Activated B cell treated with CpG ODN at 0.5 μM for 24 hours (primary cell): ENCODE measurements at regions of chr3 and their contacts with region 1.

Region 1: GRCh38 chr3:49802719-49803464 is at the start of gene INKA1:
- DNase-seq: peak; percentile 82
- ATAC-seq: peak; percentile 68
- H3K4me3 Mint-ChIP-seq: peak within 1 kb of the TSS; percentile 92
- H3K27ac Mint-ChIP-seq: peak within 1 kb of the TSS; percentile 92
- H3K4me1 Mint-ChIP-seq: peaks cover 48% of the 10 kb centered on the region
- H3K27me3 Mint-ChIP-seq: no peaks in the 10 kb centered on the region
- CTCF ChIP-seq: peak; percentile 45
- total RNA-seq, gene INKA1: 9.4 and 10.0 TPM in 2 replicates

Region 2: DNA sequence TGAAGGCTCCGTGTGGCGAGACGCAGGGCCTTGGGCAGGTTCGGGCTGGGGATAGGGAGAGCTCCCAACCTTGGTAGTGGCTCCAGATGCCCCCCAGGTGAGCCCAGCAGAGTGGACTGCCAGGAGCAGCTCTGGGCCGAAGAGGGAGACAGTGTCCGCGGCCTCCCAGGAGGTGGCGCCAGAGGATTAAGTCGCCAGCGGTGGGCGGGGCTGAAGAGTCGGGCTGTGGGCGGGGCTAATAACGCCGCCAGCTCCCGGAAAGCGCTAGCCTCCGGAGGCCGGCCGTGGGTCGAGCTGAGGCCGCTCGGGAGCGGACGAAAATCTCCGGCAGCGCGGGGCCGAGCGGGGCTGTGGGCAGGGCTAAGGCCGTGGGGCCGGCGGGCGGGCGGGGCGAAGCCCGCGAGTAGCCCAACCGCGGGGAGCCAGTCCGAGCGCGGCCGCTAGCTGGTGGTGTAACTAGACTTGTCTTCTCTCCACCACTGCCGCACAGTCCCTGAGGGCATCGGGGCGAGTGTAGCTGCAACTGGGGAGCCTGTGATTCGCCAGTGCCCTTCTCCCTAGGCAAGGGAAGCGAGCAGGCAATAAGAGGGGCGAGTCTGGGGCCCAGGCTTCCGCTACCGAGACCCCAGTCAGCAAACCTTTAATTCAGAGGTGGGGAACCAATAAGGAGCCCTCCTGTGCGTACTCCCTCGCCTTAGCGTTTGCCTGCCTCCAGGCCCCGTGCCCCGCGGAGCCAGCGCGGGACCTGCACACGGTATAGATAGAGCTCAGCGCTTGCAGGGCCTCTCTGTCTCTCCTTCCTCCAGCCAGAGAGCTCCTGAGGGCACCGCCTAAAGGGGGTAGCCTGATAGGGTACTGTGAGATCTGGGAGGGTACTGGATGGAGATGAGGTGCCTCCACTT is 263.0 kb before region 1 on chr3:
- CTCF ChIA-PET with region 1: interaction called, 8 read pairs
- POLR2A ChIA-PET with region 1: no interaction called
- intact Hi-C with region 1: loop called (anchors 1 kb)
- DNase-seq: peak; percentile 93
- ATAC-seq: peak; percentile 92
- H3K4me3 Mint-ChIP-seq: peak overlapping the region; percentile 79
- H3K27ac Mint-ChIP-seq: peak overlapping the region; percentile 46
- H3K4me1 Mint-ChIP-seq: peaks cover 9% of the 10 kb centered on the region
- H3K27me3 Mint-ChIP-seq: peaks cover 11% of the 10 kb centered on the region
- CTCF ChIP-seq: no peak

Region 3: GRCh38 chr3:49786241-49786958 is 16.5 kb before region 1 on chr3 and contains the start of gene IP6K1:
- CTCF ChIA-PET with region 1: no interaction called
- POLR2A ChIA-PET with region 1: interaction called, 19 read pairs
- intact Hi-C with region 1: loop called (anchors 1 kb)
- DNase-seq: peak; percentile 97
- ATAC-seq: peak; percentile 99
- H3K4me3 Mint-ChIP-seq: peak within 1 kb of the TSS; percentile 91
- H3K27ac Mint-ChIP-seq: peak within 1 kb of the TSS; percentile 93
- H3K4me1 Mint-ChIP-seq: peaks cover 32% of the 10 kb centered on the region
- H3K27me3 Mint-ChIP-seq: no peaks in the 10 kb centered on the region
- CTCF ChIP-seq: no peak
- total RNA-seq, gene IP6K1: 44.3 and 47.6 TPM in 2 replicates

Region 4: DNA sequence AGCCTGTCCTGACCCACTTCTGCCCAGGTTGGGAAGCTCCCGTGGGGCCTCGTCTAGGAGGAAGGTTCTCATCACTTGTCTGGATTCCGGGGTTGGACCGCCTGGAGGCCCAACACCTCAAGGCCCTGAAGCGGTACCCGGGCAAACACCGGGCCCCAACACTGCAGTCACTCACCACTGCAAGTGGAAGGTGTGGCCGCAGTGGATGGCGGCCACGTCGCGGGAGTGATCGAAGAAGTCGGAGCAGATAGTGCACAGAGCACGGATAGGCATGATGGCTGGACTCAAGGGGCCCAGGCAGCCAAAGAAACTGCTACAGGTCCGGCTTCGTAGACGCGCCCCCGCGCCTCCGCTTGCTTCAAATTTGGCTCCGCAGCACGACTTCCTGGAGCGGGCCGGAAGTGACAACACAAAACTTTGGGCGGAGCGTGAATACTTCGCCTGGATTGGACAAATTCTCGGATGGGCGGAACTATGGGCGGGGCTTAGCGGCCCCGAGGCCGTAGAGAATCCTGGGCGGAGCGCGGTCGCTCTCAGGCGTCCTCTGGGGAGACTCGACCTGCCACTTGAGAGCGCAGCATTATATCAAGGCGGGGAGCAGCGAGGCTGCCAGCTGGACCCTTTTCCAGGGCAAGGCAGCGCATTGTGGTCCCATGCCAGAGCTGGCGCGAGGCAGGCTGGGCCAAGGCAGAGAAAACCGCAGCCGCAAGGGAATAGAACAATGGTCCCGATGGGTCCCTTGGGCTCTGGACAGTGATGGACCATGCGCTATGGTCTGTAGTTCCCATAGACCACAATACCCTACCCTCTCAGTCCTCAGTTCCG is 53.5 kb after region 1 on chr3 and contains the start of gene TRAIP:
- CTCF ChIA-PET with region 1: no interaction called
- POLR2A ChIA-PET with region 1: interaction called, 3 read pairs
- intact Hi-C with region 1: loop called (anchors 1 kb)
- DNase-seq: peak; percentile 94
- ATAC-seq: peak; percentile 100
- H3K4me3 Mint-ChIP-seq: peak within 1 kb of the TSS; percentile 86
- H3K27ac Mint-ChIP-seq: peak within 1 kb of the TSS; percentile 80
- H3K4me1 Mint-ChIP-seq: peaks cover 15% of the 10 kb centered on the region
- H3K27me3 Mint-ChIP-seq: peaks cover 3% of the 10 kb centered on the region
- CTCF ChIP-seq: no peak
- total RNA-seq, gene TRAIP: 6.4 TPM in 2 replicates

Region 5: DNA sequence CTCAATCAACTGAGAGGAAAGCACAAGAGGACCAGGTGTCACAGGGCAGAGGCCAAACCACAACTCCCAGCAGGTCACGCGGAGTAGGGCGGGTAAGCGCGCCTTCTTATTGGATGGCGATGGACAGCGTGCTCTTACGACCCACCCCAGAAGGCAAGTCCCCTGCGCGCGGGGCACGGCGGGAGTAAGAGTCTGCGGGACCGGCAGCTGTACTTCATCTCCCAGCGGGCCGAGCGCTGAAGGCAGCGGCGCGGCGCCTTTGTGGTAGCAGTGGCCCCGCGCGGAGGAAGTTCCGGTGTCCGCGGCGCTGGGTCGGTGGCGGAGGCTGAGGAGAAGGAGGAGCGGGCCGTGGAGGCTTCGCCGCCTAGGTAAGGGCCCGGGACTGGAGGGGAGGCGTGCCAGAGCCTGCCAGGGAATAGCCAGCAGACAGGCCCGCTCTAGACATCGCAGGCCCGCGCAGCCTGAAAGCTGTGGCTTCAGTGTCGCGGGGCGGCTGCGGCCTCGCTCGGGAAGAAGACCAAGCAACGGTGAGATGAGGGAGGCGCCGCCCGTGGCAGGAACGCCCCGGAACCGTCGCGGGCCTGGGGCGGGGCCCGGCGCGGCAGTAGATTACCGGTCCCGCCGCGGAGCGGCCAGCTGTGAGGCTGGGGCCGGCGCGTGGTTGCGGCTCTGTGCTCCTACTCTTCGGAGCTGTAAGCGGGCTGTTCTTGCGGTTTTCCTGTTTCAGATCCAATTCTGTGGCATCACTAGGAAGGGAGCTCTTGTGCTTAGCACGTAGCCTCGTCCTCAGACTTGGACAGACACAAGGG is 137.2 kb after region 1 on chr3 and contains the start of gene RBM6:
- CTCF ChIA-PET with region 1: no interaction called
- POLR2A ChIA-PET with region 1: interaction called, 11 read pairs
- intact Hi-C with region 1: no loop called
- DNase-seq: peak; percentile 89
- ATAC-seq: peak; percentile 93
- H3K4me3 Mint-ChIP-seq: peak within 1 kb of the TSS; percentile 98
- H3K27ac Mint-ChIP-seq: peak within 1 kb of the TSS; percentile 97
- H3K4me1 Mint-ChIP-seq: peaks cover 43% of the 10 kb centered on the region
- H3K27me3 Mint-ChIP-seq: no peaks in the 10 kb centered on the region
- CTCF ChIP-seq: no peak
- total RNA-seq, gene RBM6: 160 and 172 TPM in 2 replicates

Region 6: DNA sequence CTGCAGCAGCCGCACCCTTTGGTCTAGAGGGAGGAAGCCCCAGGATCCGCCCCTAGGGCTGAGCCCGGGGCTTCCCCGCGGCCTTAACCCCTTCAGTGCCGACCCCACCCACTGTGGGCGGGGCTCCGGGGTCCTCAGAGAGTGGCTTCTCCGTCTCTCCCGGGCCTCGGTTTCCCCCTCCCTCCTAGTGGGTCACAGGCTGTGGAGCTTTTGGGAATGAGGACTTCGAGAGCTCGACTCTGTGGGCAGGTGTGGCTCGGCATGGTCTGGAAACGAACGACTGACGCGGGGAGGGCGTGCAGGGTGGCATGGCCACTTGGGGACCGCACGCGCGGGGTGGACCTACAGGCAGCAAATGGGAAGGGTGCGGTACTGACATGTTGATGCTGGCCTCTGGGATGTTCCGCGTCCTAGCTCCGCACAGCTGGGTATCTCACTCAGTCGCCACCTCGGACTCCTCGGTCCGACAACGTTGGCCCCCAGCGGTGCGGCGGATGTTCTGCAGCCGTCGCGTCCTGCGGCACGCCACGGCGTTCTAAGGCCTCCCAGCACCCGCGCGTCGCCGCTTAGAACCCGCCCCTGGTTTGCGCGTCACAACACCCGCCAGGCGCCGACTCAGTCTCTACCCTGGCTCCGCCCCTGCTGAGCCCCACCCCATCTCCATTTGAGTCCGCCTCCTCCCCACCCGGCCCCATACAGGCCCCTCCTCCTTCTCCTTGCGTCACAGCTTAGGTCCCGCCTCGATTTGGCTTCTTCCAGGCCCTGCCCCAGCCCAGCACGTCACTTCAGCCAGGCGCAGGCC is 496.1 kb after region 1 on chr3 and contains the starts of genes HYAL3 and NAA80:
- CTCF ChIA-PET with region 1: no interaction called
- POLR2A ChIA-PET with region 1: no interaction called
- intact Hi-C with region 1: loop called (anchors 10 kb)
- DNase-seq: peak; percentile 98
- ATAC-seq: peak; percentile 89
- H3K4me3 Mint-ChIP-seq: peak within 1 kb of the TSS; percentile 98
- H3K27ac Mint-ChIP-seq: peak within 1 kb of the TSS; percentile 98
- H3K4me1 Mint-ChIP-seq: peaks cover 30% of the 10 kb centered on the region
- H3K27me3 Mint-ChIP-seq: no peaks in the 10 kb centered on the region
- CTCF ChIP-seq: no peak
- total RNA-seq, gene HYAL3: 2.0 and 2.5 TPM in 2 replicates
- total RNA-seq, gene NAA80: 23.9 and 24.8 TPM in 2 replicates